Breast epithelium (tissue), 4 donors: ENCODE measurements at regions of chr12 and their contacts with region 1.

Region 1: DNA sequence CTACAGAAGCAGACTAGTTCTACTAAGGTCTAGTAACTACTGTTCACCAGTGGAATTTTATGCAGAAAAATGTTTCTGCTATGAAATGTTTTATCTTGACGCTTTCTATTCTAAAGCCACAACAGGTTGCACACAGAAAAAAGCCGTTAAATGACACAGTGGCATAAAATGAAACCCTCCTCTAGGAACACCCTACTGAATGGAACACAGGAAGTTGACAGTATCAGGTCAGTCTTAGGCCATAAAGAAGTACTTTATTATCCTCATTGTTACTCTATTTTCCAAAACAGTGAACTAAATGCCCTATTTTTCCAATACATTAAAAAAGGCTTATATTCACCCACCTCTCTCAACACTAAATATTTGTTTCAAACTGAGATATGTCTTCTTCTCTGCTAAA is 21.9 kb downstream of the EPS8 start:
- DNase-seq: no peak
- H3K4me3 ChIP-seq: no peak overlapping the region
- H3K27ac ChIP-seq: no peak overlapping the region
- H3K4me1 ChIP-seq: peaks cover 3 to 5% of the 10 kb centered on the region in 2 donors
- H3K27me3 ChIP-seq: no peaks in the 10 kb centered on the region
- CTCF ChIP-seq: no peak
- POLR2A ChIP-seq: no peak

Region 2: GRCh38 chr12:15735837-15736615 is 31.3 kb before region 1 on chr12:
- intact Hi-C with region 1: loop called (anchors 2 kb)
- DNase-seq: no peak
- H3K4me3 ChIP-seq: no peak overlapping the region
- H3K27ac ChIP-seq: no peak overlapping the region
- H3K4me1 ChIP-seq: no peaks in the 10 kb centered on the region
- H3K27me3 ChIP-seq: no peaks in the 10 kb centered on the region
- CTCF ChIP-seq: no peak
- POLR2A ChIP-seq: no peak

Region 3: GRCh38 chr12:15752785-15753184 is 14.5 kb before region 1 on chr12:
- intact Hi-C with region 1: no loop called
- DNase-seq: no peak
- H3K4me3 ChIP-seq: no peak overlapping the region
- H3K27ac ChIP-seq: no peak overlapping the region
- H3K4me1 ChIP-seq: no peaks in the 10 kb centered on the region
- H3K27me3 ChIP-seq: no peaks in the 10 kb centered on the region
- CTCF ChIP-seq: no peak
- POLR2A ChIP-seq: no peak